ENCODE measurements at regions of chr17 and their contacts with region 1.

Region 1: GRCh38 chr17:43694077-43694870 is 32.6 kb upstream of the MEOX1 start:
- H3K4me3 ChIP-seq: no peak overlapping the region
- H3K27ac ChIP-seq: no peak overlapping the region
- H3K4me1 ChIP-seq: no peaks in the 10 kb centered on the region
- CTCF ChIP-seq: peak; percentile 90

Region 2: DNA sequence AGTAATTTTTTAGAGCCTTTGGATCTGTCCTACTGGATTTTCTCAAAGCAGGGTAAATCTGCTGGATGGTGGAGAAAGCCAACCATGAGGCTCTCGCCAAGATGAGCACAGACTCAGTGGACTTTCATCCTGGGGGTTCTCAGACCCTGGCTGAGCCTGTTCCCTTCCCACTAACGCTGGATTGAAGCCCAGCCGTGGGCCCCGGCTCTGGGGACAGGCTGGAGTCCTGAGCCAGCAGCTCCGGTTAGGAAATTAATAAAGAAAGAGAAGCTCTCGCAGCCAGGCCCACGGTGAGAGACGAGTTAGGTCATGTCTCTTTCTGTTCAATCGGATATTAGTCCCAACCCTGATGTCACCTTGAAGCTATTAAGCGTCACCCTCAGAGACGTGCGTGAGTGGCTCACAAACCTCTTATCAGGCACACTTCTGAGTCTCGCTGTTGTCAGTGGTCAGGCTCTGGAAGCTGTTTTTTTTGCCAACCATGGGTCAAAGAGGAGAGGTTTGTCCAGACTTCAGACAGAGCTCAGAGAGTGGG is 59.6 kb before region 1 on chr17:
- CTCF ChIA-PET with region 1: no interaction called
- POLR2A ChIA-PET with region 1: no interaction called
- H3K4me3 ChIP-seq: no peak overlapping the region
- H3K27ac ChIP-seq: no peak overlapping the region
- H3K4me1 ChIP-seq: no peaks in the 10 kb centered on the region
- CTCF ChIP-seq: no peak

Region 3: GRCh38 chr17:43706235-43706634 is 12.0 kb after region 1 on chr17:
- CTCF ChIA-PET with region 1: interaction called, 16 read pairs
- POLR2A ChIA-PET with region 1: no interaction called
- H3K4me3 ChIP-seq: no peak overlapping the region
- H3K27ac ChIP-seq: no peak overlapping the region
- H3K4me1 ChIP-seq: no peaks in the 10 kb centered on the region
- CTCF ChIP-seq: no peak

Region 4: GRCh38 chr17:43720311-43721060 is 26.2 kb after region 1 on chr17:
- CTCF ChIA-PET with region 1: interaction called, 16 read pairs
- POLR2A ChIA-PET with region 1: interaction called, 3 read pairs
- H3K4me3 ChIP-seq: peak overlapping the region; percentile 32
- H3K27ac ChIP-seq: peak overlapping the region; percentile 67; the same call in 1 of the 2 replicates
- H3K4me1 ChIP-seq: peaks cover 9% of the 10 kb centered on the region
- CTCF ChIP-seq: no peak

Region 5: DNA sequence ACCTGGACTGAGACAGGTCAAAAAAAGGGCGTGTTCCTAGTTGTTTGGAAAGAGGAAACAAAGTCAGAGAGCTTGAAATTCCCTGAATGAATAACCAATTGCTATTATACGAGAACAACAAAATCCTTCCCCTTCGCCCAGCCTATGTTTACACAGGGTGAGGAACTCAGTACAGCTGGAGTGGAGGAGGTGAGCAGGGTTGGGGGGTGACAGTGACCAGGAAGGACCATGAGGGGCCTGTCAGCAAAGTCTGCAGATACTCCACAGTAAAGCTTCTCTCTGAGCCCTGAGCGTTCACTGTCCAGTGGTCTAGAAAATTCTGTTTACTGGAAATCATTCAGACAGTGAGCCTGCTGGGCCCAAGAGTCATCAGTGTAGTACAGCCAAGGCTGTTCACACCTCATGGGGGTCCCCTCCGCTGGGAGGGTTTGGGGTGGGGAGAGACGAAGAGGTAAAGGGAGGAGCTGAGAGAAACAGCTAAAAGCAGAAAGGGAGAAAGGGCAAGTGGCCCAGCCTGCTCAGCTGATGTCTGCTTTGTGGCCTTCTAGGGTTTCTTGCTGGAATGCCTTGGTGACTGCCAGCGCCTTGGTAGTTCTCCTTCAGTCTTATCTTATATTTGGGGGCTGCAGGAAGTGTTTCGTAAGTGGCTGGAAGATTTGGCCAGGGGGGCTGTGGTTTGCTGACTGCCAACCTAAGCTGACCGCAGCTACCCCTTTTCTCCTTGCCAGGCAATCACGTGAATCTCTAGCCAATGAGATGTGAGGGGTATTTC is 78.8 kb after region 1 on chr17:
- CTCF ChIA-PET with region 1: interaction called, 11 read pairs
- POLR2A ChIA-PET with region 1: no interaction called
- H3K4me3 ChIP-seq: no peak overlapping the region
- H3K27ac ChIP-seq: no peak overlapping the region
- H3K4me1 ChIP-seq: no peaks in the 10 kb centered on the region
- CTCF ChIP-seq: no peak

Region 6: DNA sequence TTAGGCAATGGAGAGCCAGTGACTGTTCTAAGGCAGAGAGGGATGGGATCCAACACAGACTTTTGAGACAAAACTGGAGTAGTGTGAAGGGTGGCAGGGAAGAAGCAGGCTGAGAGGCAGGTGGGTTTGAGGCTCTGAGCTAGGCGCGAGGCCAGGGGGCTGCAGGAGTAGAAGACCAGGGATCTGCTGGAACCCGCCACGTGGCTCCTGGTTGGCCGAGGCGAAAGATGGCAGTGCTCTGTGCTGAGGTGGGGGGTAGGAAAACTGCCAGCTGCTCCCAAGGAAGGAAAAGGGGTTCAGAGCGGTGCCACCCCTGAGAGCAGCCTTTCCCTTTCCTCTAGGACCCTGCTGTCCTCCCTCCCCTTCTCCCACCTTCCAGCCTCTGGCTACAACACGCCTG is 158.3 kb after region 1 on chr17:
- CTCF ChIA-PET with region 1: no interaction called
- POLR2A ChIA-PET with region 1: no interaction called
- H3K4me3 ChIP-seq: no peak overlapping the region
- H3K27ac ChIP-seq: no peak overlapping the region
- H3K4me1 ChIP-seq: no peaks in the 10 kb centered on the region
- CTCF ChIP-seq: no peak

Measured in HEK293 (cell line).